CD4-positive, alpha-beta memory T cell (primary cell): ENCODE measurements at regions of chr7 and their contacts with region 1.

Region 1: GRCh38 chr7:23696916-23697441 is 13.0 kb upstream of the STK31 start:
- DNase-seq: peak; percentile 30 to 49 (median 38)
- H3K4me3 ChIP-seq: no peak overlapping the region
- H3K4me3 Mint-ChIP-seq: peak overlapping the region in 1 of 8 donors; percentile 44
- H3K27ac ChIP-seq: no peak overlapping the region
- H3K27ac Mint-ChIP-seq: peak overlapping the region in 3 of 7 donors; percentile 19 to 62 (median 36)
- H3K4me1 ChIP-seq: no peaks in the 10 kb centered on the region
- H3K4me1 Mint-ChIP-seq: peaks cover 0 to 6% (median 3%) of the 10 kb centered on the region in 4 donors
- H3K27me3 ChIP-seq: no peaks in the 10 kb centered on the region
- H3K27me3 Mint-ChIP-seq: no peaks in the 10 kb centered on the region

Region 2: DNA sequence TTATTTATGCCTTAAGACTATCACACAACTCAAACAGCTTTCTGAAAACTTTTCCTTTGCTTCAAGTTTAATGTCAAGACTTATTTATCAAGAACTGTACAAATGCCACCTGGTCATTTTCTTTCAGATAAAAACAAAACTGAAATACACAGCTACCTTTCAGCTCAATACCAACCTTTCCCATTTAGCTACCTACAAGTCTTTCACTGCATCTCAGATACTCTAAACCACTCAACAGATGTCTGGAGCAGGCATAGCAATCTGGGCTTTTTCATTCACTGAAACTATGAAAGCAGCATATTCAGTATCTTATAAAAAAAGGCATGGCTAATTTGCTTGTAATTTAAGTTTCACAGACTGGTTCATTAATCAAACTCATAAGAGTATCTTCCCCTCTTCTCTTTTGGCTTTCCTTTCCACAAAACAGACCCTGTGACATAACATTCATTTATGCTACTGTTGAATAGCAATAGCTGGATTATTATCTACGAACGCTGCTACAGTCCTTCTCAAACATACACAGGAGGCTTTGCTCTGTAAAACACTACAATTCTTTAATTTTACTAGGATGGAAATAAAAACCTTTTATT is 173.4 kb before region 1 on chr7:
- CTCF ChIA-PET with region 1: no interaction called
- POLR2A ChIA-PET with region 1: no interaction called
- intact Hi-C with region 1: no loop called
- DNase-seq: no peak
- H3K4me3 ChIP-seq: no peak overlapping the region
- H3K4me3 Mint-ChIP-seq: peak overlapping the region in 4 of 8 donors; percentile 7 to 69 (median 40)
- H3K27ac ChIP-seq: no peak overlapping the region
- H3K27ac Mint-ChIP-seq: peak overlapping the region in 2 of 7 donors; percentile 67 to 70
- H3K4me1 ChIP-seq: peaks cover 72% of the 10 kb centered on the region
- H3K4me1 Mint-ChIP-seq: peaks cover 43 to 77% (median 58%) of the 10 kb centered on the region in 4 donors
- H3K27me3 ChIP-seq: no peaks in the 10 kb centered on the region
- H3K27me3 Mint-ChIP-seq: no peaks in the 10 kb centered on the region

Region 3: GRCh38 chr7:23570592-23571200 is 126.3 kb before region 1 on chr7:
- CTCF ChIA-PET with region 1: interaction called, 24 read pairs
- POLR2A ChIA-PET with region 1: no interaction called
- intact Hi-C with region 1: no loop called
- DNase-seq: peak; percentile 44 to 65 (median 57)
- H3K4me3 ChIP-seq: no peak overlapping the region
- H3K4me3 Mint-ChIP-seq: peak overlapping the region in 2 of 8 donors; percentile 3 to 25
- H3K27ac ChIP-seq: no peak overlapping the region
- H3K27ac Mint-ChIP-seq: peak overlapping the region in 1 of 7 donors; percentile 5
- H3K4me1 ChIP-seq: no peaks in the 10 kb centered on the region
- H3K4me1 Mint-ChIP-seq: peaks cover 0 to 3% (median under 1%) of the 10 kb centered on the region in 4 donors
- H3K27me3 ChIP-seq: no peaks in the 10 kb centered on the region
- H3K27me3 Mint-ChIP-seq: peaks cover 10 to 14% of the 10 kb centered on the region in 2 donors

Region 4: DNA sequence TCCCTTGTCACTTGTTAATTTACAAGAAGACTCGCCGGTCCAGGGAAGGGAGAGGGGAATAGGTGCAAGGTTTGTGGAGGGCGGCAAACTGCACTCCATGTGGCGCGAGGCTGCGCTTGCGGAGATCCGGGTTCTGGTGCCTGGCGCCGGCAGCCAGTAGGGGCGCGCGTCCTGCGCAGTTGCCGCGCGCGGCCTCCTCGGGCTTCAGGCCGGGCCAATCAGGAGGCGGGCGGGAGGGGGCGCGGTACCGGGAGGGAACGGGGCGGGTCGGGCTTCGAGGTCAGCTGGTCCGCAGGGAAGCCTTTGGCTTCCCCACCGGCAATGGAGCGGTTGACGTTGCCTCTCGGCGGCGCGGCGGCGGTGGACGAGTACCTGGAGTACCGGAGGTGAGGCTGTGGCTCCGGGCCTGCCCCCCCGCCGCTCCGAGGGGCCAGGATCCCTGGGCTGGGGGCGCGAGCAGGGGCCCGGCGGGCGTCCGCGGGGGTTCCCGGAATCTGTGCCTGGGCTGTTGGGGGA is 17.0 kb before region 1 on chr7 and contains the start of gene FAM221A:
- CTCF ChIA-PET with region 1: interaction called, 39 read pairs
- POLR2A ChIA-PET with region 1: no interaction called
- intact Hi-C with region 1: loop called (anchors 1 kb)
- DNase-seq: peak; percentile 71 to 86 (median 77)
- H3K4me3 ChIP-seq: peak within 1 kb of the TSS; percentile 79 to 83
- H3K4me3 Mint-ChIP-seq: peak within 1 kb of the TSS; percentile 93 to 97 (median 96)
- H3K27ac ChIP-seq: peak within 1 kb of the TSS; percentile 68
- H3K27ac Mint-ChIP-seq: peak within 1 kb of the TSS; percentile 78 to 93 (median 87)
- H3K4me1 ChIP-seq: peaks cover 4% of the 10 kb centered on the region
- H3K4me1 Mint-ChIP-seq: peaks cover 7 to 30% (median 16%) of the 10 kb centered on the region in 4 donors
- H3K27me3 ChIP-seq: no peaks in the 10 kb centered on the region
- H3K27me3 Mint-ChIP-seq: peaks cover 0 to 4% of the 10 kb centered on the region in 2 donors
- total RNA-seq, gene FAM221A: 6.8 to 7.3 TPM

Region 5: GRCh38 chr7:23685731-23686130 is 11.2 kb before region 1 on chr7:
- CTCF ChIA-PET with region 1: interaction called, 39 read pairs
- POLR2A ChIA-PET with region 1: interaction called, 3 read pairs
- intact Hi-C with region 1: loop called (anchors 1 kb)
- DNase-seq: no peak
- H3K4me3 ChIP-seq: no peak overlapping the region
- H3K4me3 Mint-ChIP-seq: no peak overlapping the region
- H3K27ac ChIP-seq: no peak overlapping the region
- H3K27ac Mint-ChIP-seq: peak overlapping the region in 1 of 7 donors; percentile 37
- H3K4me1 ChIP-seq: peaks cover 4% of the 10 kb centered on the region
- H3K4me1 Mint-ChIP-seq: peaks cover 8 to 19% (median 9%) of the 10 kb centered on the region in 4 donors
- H3K27me3 ChIP-seq: no peaks in the 10 kb centered on the region
- H3K27me3 Mint-ChIP-seq: no peaks in the 10 kb centered on the region

Region 6: DNA sequence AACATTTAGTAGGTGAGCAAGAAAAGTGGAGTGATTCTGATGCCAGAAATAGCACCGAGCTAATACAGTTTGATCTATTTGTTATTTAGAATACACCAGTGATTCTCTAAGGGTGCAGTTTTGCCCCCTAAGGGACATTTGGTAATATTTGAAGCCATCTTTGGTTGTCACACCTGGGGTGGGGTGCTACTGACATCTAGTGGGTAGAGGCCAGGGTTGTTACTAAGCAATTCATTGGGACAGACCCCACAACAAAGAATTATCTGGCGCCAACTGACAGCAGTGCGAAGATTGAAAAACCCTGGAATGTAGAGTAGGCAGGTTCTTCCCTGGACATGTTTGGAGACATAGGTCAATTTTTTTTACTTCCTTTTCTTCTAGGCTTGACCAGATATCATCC is 890.9 kb after region 1 on chr7:
- CTCF ChIA-PET with region 1: interaction called, 3 read pairs
- POLR2A ChIA-PET with region 1: no interaction called
- intact Hi-C with region 1: loop called (anchors 2 kb)
- DNase-seq: peak; percentile 32 to 59 (median 49)
- H3K4me3 ChIP-seq: no peak overlapping the region
- H3K4me3 Mint-ChIP-seq: no peak overlapping the region
- H3K27ac ChIP-seq: no peak overlapping the region
- H3K27ac Mint-ChIP-seq: no peak overlapping the region
- H3K4me1 ChIP-seq: no peaks in the 10 kb centered on the region
- H3K4me1 Mint-ChIP-seq: peaks cover 5 to 12% (median 9%) of the 10 kb centered on the region in 4 donors
- H3K27me3 ChIP-seq: no peaks in the 10 kb centered on the region
- H3K27me3 Mint-ChIP-seq: peaks cover 0 to 3% of the 10 kb centered on the region in 2 donors